ENCODE measurements at regions of chr1 and their contacts with region 1.

Region 1: DNA sequence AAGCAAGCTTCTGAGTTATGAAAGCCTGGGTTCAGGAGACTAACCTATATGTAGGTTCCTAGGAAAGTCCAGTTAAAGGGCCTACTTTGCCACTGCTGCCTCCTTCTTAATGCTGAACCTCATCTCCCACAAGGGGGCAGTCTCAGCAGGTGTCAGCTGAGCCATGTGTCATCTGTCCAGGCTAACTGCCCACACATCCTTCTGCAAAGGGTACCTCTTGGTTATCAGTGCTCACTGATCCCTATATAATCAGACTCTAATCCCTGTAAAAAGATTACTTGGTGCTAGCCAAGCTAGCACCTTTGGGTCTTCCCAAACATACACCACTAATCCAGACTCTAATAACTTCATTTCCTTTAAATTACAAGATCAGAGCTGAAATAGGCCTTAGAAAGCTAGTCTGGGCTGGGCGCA is 9.0 kb downstream of the PRDX1 start:
- DNase-seq: peak; percentile 82
- H3K4me3 Mint-ChIP-seq: no peak overlapping the region
- H3K27ac Mint-ChIP-seq: no peak overlapping the region
- H3K4me1 Mint-ChIP-seq: no peaks in the 10 kb centered on the region
- H3K27me3 Mint-ChIP-seq: no peaks in the 10 kb centered on the region
- CTCF ChIP-seq: peak; percentile 67

Region 2: DNA sequence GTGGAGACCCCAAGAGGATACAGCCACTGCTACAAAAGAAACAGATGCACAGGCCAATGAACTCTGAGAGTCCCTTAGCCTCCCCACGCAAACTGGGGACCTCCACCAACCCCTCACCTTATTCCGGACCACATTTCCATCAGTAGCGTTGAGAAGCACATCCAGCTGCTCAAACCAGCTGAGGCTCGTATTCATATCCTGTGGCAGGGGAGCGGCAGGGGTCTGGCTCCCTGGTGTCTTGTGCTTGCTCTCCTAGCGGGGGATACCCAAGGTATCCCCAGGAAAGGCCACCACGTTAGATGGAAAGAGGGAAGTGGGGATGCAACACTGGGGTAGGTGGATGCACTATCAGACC is 13.3 kb before region 1 on chr1:
- CTCF ChIA-PET with region 1: interaction called, 25 read pairs
- POLR2A ChIA-PET with region 1: interaction called, 7 read pairs
- intact Hi-C with region 1: no loop called
- DNase-seq: no peak
- H3K4me3 Mint-ChIP-seq: peak overlapping the region; percentile 97
- H3K27ac Mint-ChIP-seq: peak overlapping the region; percentile 94
- H3K4me1 Mint-ChIP-seq: peaks cover 26% of the 10 kb centered on the region
- H3K27me3 Mint-ChIP-seq: no peaks in the 10 kb centered on the region
- CTCF ChIP-seq: no peak

Region 3: GRCh38 chr1:45557422-45557944 is 44.8 kb after region 1 on chr1:
- CTCF ChIA-PET with region 1: interaction called, 25 read pairs
- POLR2A ChIA-PET with region 1: interaction called, 272 read pairs
- intact Hi-C with region 1: no loop called
- DNase-seq: peak; percentile 91
- H3K4me3 Mint-ChIP-seq: peak overlapping the region; percentile 38
- H3K27ac Mint-ChIP-seq: peak overlapping the region; percentile 78
- H3K4me1 Mint-ChIP-seq: peaks cover 13% of the 10 kb centered on the region
- H3K27me3 Mint-ChIP-seq: no peaks in the 10 kb centered on the region
- CTCF ChIP-seq: no peak

Measured in MCF 10A (cell line).